IMR-90 (cell line): ENCODE measurements at regions of chr14 and their contacts with region 1.

Region 1: GRCh38 chr14:36070031-36070719 is 106.3 kb downstream of the PTCSC3 start:
- DNase-seq: peak; percentile 64
- ATAC-seq: peak; percentile 94
- H3K4me3 ChIP-seq: no peak overlapping the region
- H3K27ac ChIP-seq: no peak overlapping the region
- H3K4me1 ChIP-seq: no peaks in the 10 kb centered on the region
- H3K27me3 ChIP-seq: peaks cover 15% of the 10 kb centered on the region
- CTCF ChIP-seq: peak; percentile 82
- POLR2A ChIP-seq: no peak
- RAD21 ChIP-seq: peak; percentile 85

Region 2: DNA sequence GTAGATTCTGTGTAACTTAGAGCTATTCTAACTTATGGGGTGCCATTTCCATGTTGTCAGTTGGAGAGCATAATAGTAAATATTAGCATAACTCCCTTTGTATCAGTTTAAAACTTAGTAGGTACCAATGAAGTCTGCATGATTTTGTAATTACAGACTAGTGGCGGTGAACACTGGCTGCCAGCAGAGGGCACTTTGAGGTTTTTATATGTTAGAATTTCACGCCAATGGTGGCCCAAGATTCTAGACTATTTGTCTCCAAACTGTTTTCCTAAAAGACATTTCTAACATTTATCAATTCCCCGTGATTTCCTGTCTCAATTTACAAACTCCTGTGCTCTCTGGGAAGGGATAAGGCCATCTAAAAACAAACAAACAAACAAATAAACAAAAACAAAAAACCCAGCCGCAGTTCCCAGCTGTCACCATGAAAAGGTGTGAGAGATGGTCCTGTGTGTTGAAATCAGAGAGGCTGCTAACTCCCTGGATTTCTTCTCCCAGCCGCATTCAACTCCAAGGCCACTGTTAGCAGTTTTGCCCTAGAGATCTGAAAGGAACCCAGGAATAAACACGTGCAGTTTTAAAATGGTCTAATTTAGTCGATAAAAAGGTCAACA is 186.4 kb before region 1 on chr14:
- CTCF ChIA-PET with region 1: interaction called, 3 read pairs
- POLR2A ChIA-PET with region 1: no interaction called
- dilution Hi-C with region 1: no loop called
- in situ Hi-C with region 1: no loop called
- intact Hi-C with region 1: loop called (anchors 5 kb)
- DNase-seq: peak; percentile 18
- ATAC-seq: peak; percentile 59
- H3K4me3 ChIP-seq: no peak overlapping the region
- H3K27ac ChIP-seq: no peak overlapping the region
- H3K4me1 ChIP-seq: peaks cover 2% of the 10 kb centered on the region
- H3K27me3 ChIP-seq: no peaks in the 10 kb centered on the region; the same call in 1 of the 2 replicates
- CTCF ChIP-seq: peak; percentile 65
- POLR2A ChIP-seq: no peak
- RAD21 ChIP-seq: peak; percentile 33

Region 3: GRCh38 chr14:36091096-36091495 is 20.9 kb after region 1 on chr14:
- CTCF ChIA-PET with region 1: interaction called, 15 read pairs
- POLR2A ChIA-PET with region 1: no interaction called
- dilution Hi-C with region 1: no loop called
- in situ Hi-C with region 1: no loop called
- intact Hi-C with region 1: no loop called
- DNase-seq: peak; percentile 93
- ATAC-seq: peak; percentile 98
- H3K4me3 ChIP-seq: no peak overlapping the region
- H3K27ac ChIP-seq: peak overlapping the region; percentile 60; the same call in 1 of the 2 replicates
- H3K4me1 ChIP-seq: no peaks in the 10 kb centered on the region; the same call in 1 of the 2 replicates
- H3K27me3 ChIP-seq: no peaks in the 10 kb centered on the region
- CTCF ChIP-seq: no peak
- POLR2A ChIP-seq: no peak
- RAD21 ChIP-seq: peak; percentile 13; the same call in 1 of the 2 replicates

Region 4: GRCh38 chr14:36320200-36320896 is 250.2 kb after region 1 on chr14 and contains the start of gene MBIP:
- CTCF ChIA-PET with region 1: interaction called, 3 read pairs
- POLR2A ChIA-PET with region 1: no interaction called
- dilution Hi-C with region 1: no loop called
- in situ Hi-C with region 1: no loop called
- intact Hi-C with region 1: loop called (anchors 1 kb)
- DNase-seq: peak; percentile 97
- ATAC-seq: peak; percentile 99
- H3K4me3 ChIP-seq: peak within 1 kb of the TSS; percentile 77
- H3K27ac ChIP-seq: peak within 1 kb of the TSS; percentile 84
- H3K4me1 ChIP-seq: no peaks in the 10 kb centered on the region
- H3K27me3 ChIP-seq: no peaks in the 10 kb centered on the region
- CTCF ChIP-seq: no peak
- POLR2A ChIP-seq: peak; percentile 56; the same call in 1 of the 2 replicates
- RAD21 ChIP-seq: no peak
- total RNA-seq, gene MBIP: 9.3 and 15.0 TPM in 2 replicates

Region 5: GRCh38 chr14:36373982-36374673 is 304.0 kb after region 1 on chr14:
- CTCF ChIA-PET with region 1: interaction called, 29 read pairs
- POLR2A ChIA-PET with region 1: no interaction called
- dilution Hi-C with region 1: no loop called
- in situ Hi-C with region 1: loop called (anchors 5 kb)
- intact Hi-C with region 1: loop called (anchors 1 kb)
- DNase-seq: peak; percentile 74
- ATAC-seq: peak; percentile 99
- H3K4me3 ChIP-seq: no peak overlapping the region
- H3K27ac ChIP-seq: no peak overlapping the region
- H3K4me1 ChIP-seq: no peaks in the 10 kb centered on the region
- H3K27me3 ChIP-seq: peaks cover 3% of the 10 kb centered on the region
- CTCF ChIP-seq: peak; percentile 91
- POLR2A ChIP-seq: no peak
- RAD21 ChIP-seq: peak; percentile 84

Region 6: DNA sequence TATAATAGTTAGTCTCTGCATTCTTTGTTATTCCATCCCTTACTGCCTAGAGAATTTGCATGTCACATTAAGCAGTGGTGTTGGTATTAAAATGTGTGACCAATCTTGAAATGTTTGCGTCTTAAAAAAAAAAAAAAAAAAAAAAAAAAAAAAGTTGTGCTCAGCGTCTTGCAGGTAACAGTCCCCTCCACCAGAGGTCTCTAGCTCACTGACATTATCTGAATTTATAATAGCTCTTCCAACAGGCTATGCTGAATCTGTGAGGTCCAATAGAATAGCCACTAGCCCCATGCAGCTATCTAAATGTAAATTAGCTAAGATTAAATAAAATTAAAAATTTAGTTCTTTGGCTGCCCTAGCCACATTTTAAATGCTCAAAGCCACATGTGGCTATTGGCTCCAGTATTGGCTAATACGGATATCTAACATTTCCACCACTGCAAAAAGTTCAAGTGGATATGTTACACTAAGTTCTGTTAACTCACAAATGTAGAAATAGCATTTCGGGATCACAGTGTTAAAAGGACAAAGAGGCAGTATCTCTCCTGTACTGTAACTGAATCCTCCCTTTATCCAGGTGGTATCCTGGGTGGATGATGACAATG is 483.6 kb after region 1 on chr14:
- CTCF ChIA-PET with region 1: interaction called, 6 read pairs
- POLR2A ChIA-PET with region 1: no interaction called
- dilution Hi-C with region 1: no loop called
- in situ Hi-C with region 1: no loop called
- intact Hi-C with region 1: loop called (anchors 1 kb)
- DNase-seq: peak; percentile 51
- ATAC-seq: peak; percentile 90
- H3K4me3 ChIP-seq: no peak overlapping the region
- H3K27ac ChIP-seq: no peak overlapping the region
- H3K4me1 ChIP-seq: no peaks in the 10 kb centered on the region
- H3K27me3 ChIP-seq: no peaks in the 10 kb centered on the region; the same call in 1 of the 2 replicates
- CTCF ChIP-seq: peak; percentile 81
- POLR2A ChIP-seq: no peak
- RAD21 ChIP-seq: peak; percentile 62